Activated B cell treated with CpG ODN at 0.5 μM for 24 hours (primary cell): ENCODE measurements at regions of chr4 and their contacts with region 1.

Region 1: GRCh38 chr4:74444891-74445642 is at the start of gene AREG:
- DNase-seq: peak; percentile 87
- ATAC-seq: peak; percentile 92
- H3K4me3 Mint-ChIP-seq: peak within 1 kb of the TSS; percentile 95
- H3K27ac Mint-ChIP-seq: peak within 1 kb of the TSS; percentile 96
- H3K4me1 Mint-ChIP-seq: peaks cover 14% of the 10 kb centered on the region
- H3K27me3 Mint-ChIP-seq: peaks cover 3% of the 10 kb centered on the region
- CTCF ChIP-seq: no peak
- total RNA-seq, gene AREG: 2.1 and 2.2 TPM in 2 replicates

Region 2: GRCh38 chr4:73069338-73070073 is 1375.6 kb before region 1 on chr4 and contains the start of gene COX18:
- CTCF ChIA-PET with region 1: no interaction called
- POLR2A ChIA-PET with region 1: no interaction called
- intact Hi-C with region 1: loop called (anchors 2 kb)
- DNase-seq: peak; percentile 96
- ATAC-seq: peak; percentile 80
- H3K4me3 Mint-ChIP-seq: peak within 1 kb of the TSS; percentile 89
- H3K27ac Mint-ChIP-seq: peak within 1 kb of the TSS; percentile 97
- H3K4me1 Mint-ChIP-seq: peaks cover 37% of the 10 kb centered on the region
- H3K27me3 Mint-ChIP-seq: no peaks in the 10 kb centered on the region
- CTCF ChIP-seq: no peak
- total RNA-seq, gene COX18: 12.2 and 13.5 TPM in 2 replicates

Region 3: GRCh38 chr4:74376888-74377483 is 68.1 kb before region 1 on chr4:
- CTCF ChIA-PET with region 1: interaction called, 4 read pairs
- POLR2A ChIA-PET with region 1: interaction called, 6 read pairs
- intact Hi-C with region 1: loop called (anchors 1 kb)
- DNase-seq: no peak
- ATAC-seq: peak; percentile 52
- H3K4me3 Mint-ChIP-seq: no peak overlapping the region
- H3K27ac Mint-ChIP-seq: no peak overlapping the region
- H3K4me1 Mint-ChIP-seq: no peaks in the 10 kb centered on the region
- H3K27me3 Mint-ChIP-seq: peaks cover 2% of the 10 kb centered on the region
- CTCF ChIP-seq: peak; percentile 63

Region 4: GRCh38 chr4:74531963-74532794 is 87.1 kb after region 1 on chr4:
- CTCF ChIA-PET with region 1: interaction called, 3 read pairs
- POLR2A ChIA-PET with region 1: no interaction called
- intact Hi-C with region 1: loop called (anchors 5 kb)
- DNase-seq: no peak
- ATAC-seq: peak; percentile 68
- H3K4me3 Mint-ChIP-seq: no peak overlapping the region
- H3K27ac Mint-ChIP-seq: no peak overlapping the region
- H3K4me1 Mint-ChIP-seq: no peaks in the 10 kb centered on the region
- H3K27me3 Mint-ChIP-seq: peaks cover 2% of the 10 kb centered on the region
- CTCF ChIP-seq: no peak

Region 5: GRCh38 chr4:74675673-74676279 is 230.7 kb after region 1 on chr4:
- CTCF ChIA-PET with region 1: no interaction called
- POLR2A ChIA-PET with region 1: no interaction called
- intact Hi-C with region 1: loop called (anchors 5 kb)
- DNase-seq: no peak
- ATAC-seq: peak; percentile 65
- H3K4me3 Mint-ChIP-seq: no peak overlapping the region
- H3K27ac Mint-ChIP-seq: no peak overlapping the region
- H3K4me1 Mint-ChIP-seq: no peaks in the 10 kb centered on the region
- H3K27me3 Mint-ChIP-seq: peaks cover 9% of the 10 kb centered on the region
- CTCF ChIP-seq: no peak

Region 6: DNA sequence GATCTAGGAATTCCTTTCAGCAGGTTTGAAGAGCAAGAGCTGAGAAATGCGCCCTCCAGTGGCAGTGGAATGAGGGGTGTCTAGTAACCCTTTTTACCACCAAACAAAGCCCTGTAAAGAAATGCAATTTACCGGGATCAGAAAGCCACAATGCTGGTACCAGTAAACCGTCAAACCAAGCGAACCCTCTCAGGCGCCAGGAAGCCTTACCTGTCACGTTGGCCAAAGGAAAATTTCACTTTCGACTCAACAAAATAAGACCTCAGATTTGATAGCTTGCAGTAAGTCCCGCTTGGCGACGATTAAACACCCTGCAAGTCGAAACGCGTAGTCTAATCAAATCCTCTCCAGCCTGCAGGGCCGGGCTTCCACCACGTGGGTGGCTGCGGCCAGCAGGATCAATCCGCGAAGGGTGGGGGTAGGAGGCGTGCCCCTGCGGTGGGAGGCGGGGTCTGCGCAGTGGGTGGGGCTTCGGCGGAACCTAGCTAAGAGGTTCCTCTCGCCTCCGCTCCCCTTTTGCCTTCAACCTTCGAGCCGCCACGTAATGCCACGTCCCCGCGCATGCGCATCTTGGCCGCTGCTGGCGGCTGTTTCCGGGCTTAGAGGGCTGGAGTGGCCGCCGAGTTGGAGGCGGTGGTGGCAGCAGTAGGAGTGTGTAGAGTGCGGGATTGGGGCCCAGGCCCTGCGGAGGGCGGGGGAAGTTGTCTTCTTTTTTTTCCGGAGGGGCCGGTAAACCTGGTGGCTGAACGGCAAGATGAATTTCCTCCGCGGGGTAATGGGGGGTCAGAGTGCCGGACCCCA is 1279.2 kb after region 1 on chr4 and contains the start of gene USO1:
- CTCF ChIA-PET with region 1: no interaction called
- POLR2A ChIA-PET with region 1: no interaction called
- intact Hi-C with region 1: loop called (anchors 10 kb)
- DNase-seq: peak; percentile 99
- ATAC-seq: peak; percentile 95
- H3K4me3 Mint-ChIP-seq: peak within 1 kb of the TSS; percentile 100
- H3K27ac Mint-ChIP-seq: peak within 1 kb of the TSS; percentile 99
- H3K4me1 Mint-ChIP-seq: peaks cover 52% of the 10 kb centered on the region
- H3K27me3 Mint-ChIP-seq: no peaks in the 10 kb centered on the region
- CTCF ChIP-seq: peak; percentile 23
- total RNA-seq, gene USO1: 41.3 and 41.7 TPM in 2 replicates